ENCODE measurements at regions of chr15 and their contacts with region 1.

Region 1: DNA sequence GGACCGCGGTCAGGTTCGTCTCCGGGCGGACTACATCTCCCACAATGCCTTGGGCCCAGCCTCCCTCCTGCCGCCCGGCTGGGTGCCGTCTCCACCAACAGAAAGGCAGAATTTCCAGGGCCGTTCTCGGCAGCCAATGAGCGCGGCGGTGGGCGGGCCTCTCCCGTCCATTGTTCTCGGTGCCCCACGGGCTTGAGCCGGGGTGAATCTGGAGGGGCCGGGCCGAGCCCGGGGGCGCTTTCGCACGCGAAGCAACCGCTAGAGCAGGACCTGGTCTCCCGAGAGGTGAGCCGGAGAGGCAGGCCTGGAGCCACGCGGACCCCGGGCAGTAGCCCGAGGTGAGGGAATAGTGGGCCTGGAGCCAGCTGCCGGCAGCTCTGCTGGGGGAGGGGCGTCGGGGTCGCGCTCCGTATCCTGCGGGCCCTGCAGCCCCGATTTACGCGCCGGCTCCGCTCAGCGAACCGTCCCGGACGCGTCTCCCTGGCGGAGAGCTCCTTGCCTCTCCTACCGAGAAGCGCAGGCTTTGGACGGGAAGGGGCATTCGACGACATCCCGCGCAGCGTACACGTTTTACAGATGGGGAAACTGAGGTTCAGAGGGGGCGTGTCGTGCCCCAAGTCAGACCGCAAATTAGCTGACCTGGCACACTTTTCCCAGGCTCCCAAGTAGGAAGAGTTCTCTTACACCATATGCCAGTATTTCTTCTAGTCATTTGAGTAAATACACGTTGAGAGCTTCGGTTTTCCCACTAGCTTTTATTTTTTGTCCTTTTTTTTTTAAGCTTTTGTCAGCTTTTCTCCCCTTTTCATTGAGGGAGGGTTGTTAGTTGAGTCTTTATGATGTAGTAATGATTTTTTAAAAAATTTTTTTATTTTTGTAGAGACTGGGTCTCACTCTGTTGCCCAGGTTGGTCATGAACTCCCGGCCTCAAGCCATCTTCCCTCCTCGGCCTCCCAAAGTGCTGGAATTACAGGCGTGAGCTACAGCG is at the start of gene ZSCAN2:
- DNase-seq: peak; percentile 97
- ATAC-seq: peak; percentile 99
- total RNA-seq, gene ZSCAN2: 4.5 to 5.0 TPM

Region 2: GRCh38 chr15:84638103-84638502 is 37.0 kb after region 1 on chr15:
- intact Hi-C with region 1: no loop called
- DNase-seq: no peak
- ATAC-seq: no peak

Region 3: DNA sequence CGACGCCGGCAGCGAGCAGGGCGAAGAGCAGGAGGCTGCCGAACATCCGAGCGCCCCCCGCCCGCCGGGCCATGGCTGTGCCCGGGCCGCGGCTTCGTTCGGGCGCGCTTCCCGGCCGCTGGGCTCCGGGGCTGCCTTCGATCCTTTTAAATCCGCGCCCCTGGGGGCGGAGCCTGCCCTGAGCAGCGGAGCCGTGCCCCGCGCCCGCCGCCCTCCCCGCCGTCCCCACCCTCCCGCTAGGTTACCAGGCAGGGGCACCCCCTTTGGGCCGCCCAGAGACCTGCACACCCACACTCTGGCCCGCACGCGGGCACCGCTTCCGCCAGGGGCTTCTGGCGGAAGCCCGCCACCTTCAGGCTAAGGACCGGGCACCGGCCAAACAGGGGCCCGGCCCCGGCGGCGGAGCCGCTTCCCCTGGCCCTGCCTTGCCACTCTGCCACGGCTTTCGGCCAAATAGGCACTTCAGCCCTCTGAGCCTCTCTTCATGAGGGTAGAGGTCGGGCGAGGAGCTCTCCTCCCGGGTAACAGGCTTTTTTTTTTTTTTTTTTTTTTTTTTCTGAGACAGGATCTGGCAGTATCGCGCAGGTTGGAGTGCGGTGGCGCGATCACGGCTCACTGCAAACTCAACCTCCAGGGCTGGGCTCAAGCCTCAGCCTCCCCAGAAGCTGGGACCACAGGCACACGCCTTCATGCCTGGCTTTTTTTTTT is 57.1 kb after region 1 on chr15 and contains the start of gene NMB:
- intact Hi-C with region 1: loop called (anchors 5 kb)
- DNase-seq: peak; percentile 83
- ATAC-seq: peak; percentile 64 to 73
- total RNA-seq, gene NMB: 14.7 to 31.6 TPM

Region 4: GRCh38 chr15:84697236-84697990 is 96.3 kb after region 1 on chr15:
- intact Hi-C with region 1: no loop called
- DNase-seq: no peak
- ATAC-seq: no peak

Region 5: GRCh38 chr15:84797212-84797611 is 196.1 kb after region 1 on chr15:
- intact Hi-C with region 1: loop called in 1 of 2 experiments (anchors 10 kb)
- DNase-seq: no peak
- ATAC-seq: no peak

Region 6: DNA sequence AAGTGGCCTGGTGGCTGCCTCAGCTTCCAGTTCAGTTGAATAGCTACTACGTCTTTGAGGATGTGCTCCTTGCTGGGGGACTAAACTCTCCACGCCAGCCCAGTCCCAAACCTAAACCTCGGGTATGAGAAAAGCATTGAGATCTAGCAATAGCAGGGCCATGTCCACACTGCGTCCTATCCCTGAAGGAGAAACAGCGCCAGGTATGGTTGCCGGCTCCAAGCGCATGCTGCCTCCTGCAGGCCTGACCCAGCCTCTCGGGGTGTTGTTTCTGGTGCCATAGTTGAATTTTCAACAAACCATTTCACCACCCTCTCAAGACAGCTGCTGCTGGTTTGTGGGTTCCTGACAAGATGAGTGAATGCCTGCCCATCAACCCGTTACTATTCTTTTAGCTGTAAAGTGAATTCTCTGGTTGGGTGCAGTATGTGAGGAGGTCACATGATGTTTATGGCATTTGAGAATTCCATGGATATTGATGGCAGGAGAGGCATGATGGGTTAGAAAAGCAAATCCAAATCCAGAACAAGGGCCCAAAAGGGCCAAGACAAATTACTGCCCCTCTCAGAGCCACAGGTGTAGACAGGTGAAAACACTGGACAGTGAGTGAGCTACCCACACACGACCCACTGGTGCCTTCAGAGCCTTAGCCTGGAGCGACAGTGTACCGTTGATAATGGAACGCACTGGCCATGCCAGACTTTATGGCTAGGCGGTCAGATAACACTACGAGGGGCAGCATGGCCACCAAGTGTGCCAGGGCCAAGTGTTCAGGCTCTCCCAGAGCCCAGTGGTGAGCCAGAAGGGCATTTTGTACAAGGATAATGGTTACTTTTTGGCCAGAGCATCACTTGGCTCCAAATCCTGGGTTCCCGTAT is 270.5 kb after region 1 on chr15:
- intact Hi-C with region 1: loop called in 1 of 2 experiments (anchors 10 kb)
- DNase-seq: no peak
- ATAC-seq: peak in 1 of 2 donors; percentile 4

Region 7: GRCh38 chr15:84929744-84930371 is 328.7 kb after region 1 on chr15:
- intact Hi-C with region 1: loop called (anchors 5 to 10 kb)
- DNase-seq: no peak
- ATAC-seq: no peak

Region 8: GRCh38 chr15:85044251-85044853 is 443.2 kb after region 1 on chr15:
- intact Hi-C with region 1: loop called in 1 of 2 experiments (anchors 10 kb)
- DNase-seq: peak; percentile 57
- ATAC-seq: peak; percentile 67 to 83